ENCODE measurements at regions of chr22 and their contacts with region 1.

Region 1: DNA sequence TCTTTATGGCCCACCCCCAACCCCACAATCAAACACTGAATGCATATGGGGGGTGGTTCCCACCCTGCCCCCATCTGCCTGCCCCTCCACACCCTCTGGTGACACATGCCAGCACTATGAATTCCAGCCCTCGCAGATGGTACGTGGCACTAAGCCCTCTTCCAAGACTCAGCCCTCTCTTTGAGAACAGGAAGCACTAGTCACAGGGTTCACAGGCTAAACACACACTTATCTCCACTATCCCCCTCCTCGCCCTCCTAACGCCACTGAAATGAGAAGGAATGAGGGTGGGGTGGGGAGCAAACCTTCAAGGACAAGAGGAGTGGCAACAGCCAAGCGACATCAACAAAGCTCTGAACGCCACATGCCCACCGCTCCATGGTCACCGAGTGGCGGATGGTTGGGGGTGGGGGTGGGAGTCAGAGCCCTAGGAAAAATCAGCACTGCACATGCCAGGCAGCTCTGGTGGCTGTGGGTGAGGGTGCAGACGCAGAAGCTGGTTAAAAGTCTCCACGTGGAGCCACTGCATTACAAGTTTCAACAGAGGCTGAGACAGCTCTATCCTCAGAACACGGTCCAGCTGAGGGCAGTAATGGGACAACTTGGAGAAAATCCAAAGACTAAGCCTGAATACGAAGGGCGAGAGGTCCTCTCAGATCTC is 33.6 kb downstream of the TMEM184B start:
- DNase-seq: peak; percentile 93
- ATAC-seq: peak; percentile 86
- H3K4me3 ChIP-seq: peak overlapping the region; percentile 30; the same call in 1 of the 2 replicates
- H3K27ac ChIP-seq: peak overlapping the region; percentile 99
- H3K4me1 ChIP-seq: peaks cover 57% of the 10 kb centered on the region
- H3K27me3 ChIP-seq: no peaks in the 10 kb centered on the region
- CTCF ChIP-seq: peak; percentile 45; the same call in 1 of the 2 replicates

Region 2: GRCh38 chr22:38228873-38229740 is 10.1 kb before region 1 on chr22:
- CTCF ChIA-PET with region 1: no interaction called
- POLR2A ChIA-PET with region 1: no interaction called
- intact Hi-C with region 1: loop called (anchors 1 kb)
- DNase-seq: peak; percentile 86
- ATAC-seq: peak; percentile 89
- H3K4me3 ChIP-seq: no peak overlapping the region; the same call in 1 of the 2 replicates
- H3K27ac ChIP-seq: peak overlapping the region; percentile 98
- H3K4me1 ChIP-seq: peaks cover 27% of the 10 kb centered on the region
- H3K27me3 ChIP-seq: no peaks in the 10 kb centered on the region
- CTCF ChIP-seq: no peak

Measured in PC-3 (cell line).